Mucosa of descending colon (tissue), 3 donors: ENCODE measurements at regions of chr1 and their contacts with region 1.

Region 1: DNA sequence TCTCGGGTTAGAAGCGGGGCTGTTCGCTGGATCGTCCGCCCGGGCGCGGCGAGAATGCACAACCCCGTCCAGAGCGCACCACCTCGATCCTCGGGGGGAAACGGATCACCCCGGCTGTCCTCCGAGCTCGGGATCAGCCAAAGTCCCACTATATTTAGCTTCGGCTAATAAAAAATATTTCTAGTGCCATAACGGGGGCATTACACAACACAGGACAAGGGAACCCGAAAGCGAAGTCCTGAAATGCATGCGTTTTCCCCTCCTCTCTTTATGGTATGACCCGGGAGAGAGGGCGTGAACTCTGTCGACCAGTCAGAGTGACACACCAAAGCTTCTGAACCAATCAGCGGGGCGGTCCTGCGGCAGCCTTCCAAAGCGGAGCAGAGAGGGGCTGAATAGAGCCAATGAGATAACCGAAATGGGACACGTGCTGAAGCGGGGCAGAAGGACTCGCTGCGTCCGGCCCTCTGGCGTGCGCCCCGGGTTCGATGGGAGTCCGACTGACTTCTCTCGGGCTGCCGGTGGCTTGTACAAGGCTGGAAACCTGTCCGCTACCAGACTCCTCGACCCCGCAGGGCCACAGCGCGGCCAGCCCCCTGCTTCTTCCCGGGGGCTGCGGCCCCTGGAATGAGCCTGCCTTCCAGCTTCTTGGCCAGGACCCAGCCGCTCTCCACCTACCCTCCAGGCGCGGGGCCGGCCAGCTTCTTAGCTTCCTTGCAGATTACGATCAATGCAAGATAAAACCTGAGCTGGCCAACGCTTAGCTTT is at the start of gene ALDH4A1:
- DNase-seq: peak; percentile 96 to 98 (median 96)
- ATAC-seq: peak; percentile 97
- H3K4me3 ChIP-seq: peak within 1 kb of the TSS; percentile 44
- H3K4me1 ChIP-seq: peaks cover 10% of the 10 kb centered on the region
- CTCF ChIP-seq: no peak
- total RNA-seq, gene ALDH4A1: 2.7 to 7.7 (median 5.6) TPM

Region 2: GRCh38 chr1:18761948-18762850 is 140.5 kb before region 1 on chr1:
- intact Hi-C with region 1: no loop called
- DNase-seq: no peak
- ATAC-seq: no peak
- H3K4me3 ChIP-seq: no peak overlapping the region
- H3K4me1 ChIP-seq: no peaks in the 10 kb centered on the region
- CTCF ChIP-seq: no peak

Region 3: GRCh38 chr1:18956369-18957135 is 53.8 kb after region 1 on chr1 and contains the start of gene IFFO2:
- intact Hi-C with region 1: loop called in 1 of 2 experiments (anchors 10 kb)
- DNase-seq: peak; percentile 98 to 99 (median 99)
- ATAC-seq: peak; percentile 94
- H3K4me3 ChIP-seq: peak within 1 kb of the TSS; percentile 57
- H3K4me1 ChIP-seq: peaks cover 22% of the 10 kb centered on the region
- CTCF ChIP-seq: no peak
- total RNA-seq, gene IFFO2: 13.1 to 19.0 (median 15.5) TPM

Region 4: GRCh38 chr1:18972531-18972930 is 69.8 kb after region 1 on chr1:
- intact Hi-C with region 1: loop called in 1 of 2 experiments (anchors 5 kb)
- DNase-seq: peak in 1 of 3 donors; percentile 39
- ATAC-seq: no peak
- H3K4me3 ChIP-seq: no peak overlapping the region
- H3K4me1 ChIP-seq: no peaks in the 10 kb centered on the region
- CTCF ChIP-seq: no peak

Region 5: GRCh38 chr1:19013826-19014548 is 111.3 kb after region 1 on chr1:
- intact Hi-C with region 1: no loop called
- DNase-seq: peak in 1 of 3 donors; percentile 74
- ATAC-seq: peak; percentile 73
- H3K4me3 ChIP-seq: no peak overlapping the region
- H3K4me1 ChIP-seq: peaks cover 32% of the 10 kb centered on the region
- CTCF ChIP-seq: no peak

Region 6: DNA sequence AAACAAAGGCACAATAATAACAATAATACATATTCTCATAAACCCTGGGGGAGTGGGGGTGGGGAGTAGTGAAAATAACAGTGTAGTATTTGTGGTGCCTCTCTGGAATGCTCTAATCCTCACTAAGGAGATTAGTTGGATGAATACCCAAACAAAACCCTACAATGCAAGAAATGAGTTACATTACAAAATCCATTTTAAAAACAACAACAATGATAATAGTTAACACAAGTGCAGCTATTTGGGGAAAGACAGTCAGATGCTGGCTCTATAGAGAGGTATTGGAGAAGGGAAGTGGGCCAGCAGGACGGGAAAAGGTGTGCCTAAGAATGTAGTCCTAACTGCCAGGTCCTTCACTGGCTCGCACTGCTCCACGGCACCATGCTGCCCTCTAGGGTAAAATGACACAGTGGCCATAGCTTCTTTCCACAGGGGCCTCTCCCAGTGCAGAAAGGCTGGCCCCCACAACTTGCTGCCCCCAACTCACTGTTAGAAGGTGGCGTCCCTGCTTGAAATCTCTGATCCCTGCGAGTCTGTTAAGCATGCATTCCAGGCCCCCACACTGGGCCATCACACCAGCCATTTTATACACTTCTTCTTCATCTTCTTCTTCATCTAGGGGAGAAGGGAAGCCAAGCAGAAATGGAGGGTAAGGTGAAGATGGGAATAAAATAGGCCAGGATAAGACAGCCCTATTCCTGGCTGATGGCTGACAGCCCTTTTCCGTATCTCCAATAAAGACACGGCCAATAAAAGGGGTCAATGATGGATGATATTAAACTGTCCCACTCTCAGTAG is 193.5 kb after region 1 on chr1:
- intact Hi-C with region 1: loop called in 1 of 2 experiments (anchors 10 kb)
- DNase-seq: peak in 2 of 3 donors; percentile 72 to 73
- ATAC-seq: peak; percentile 79
- H3K4me3 ChIP-seq: no peak overlapping the region
- H3K4me1 ChIP-seq: peaks cover 14% of the 10 kb centered on the region
- CTCF ChIP-seq: no peak